ENCODE measurements at regions of chr3 and their contacts with region 1.

Region 1: GRCh38 chr3:141279077-141279967 is 47.7 kb downstream of the PXYLP1 start:
- DNase-seq: no peak
- ATAC-seq: peak; percentile 57 to 73
- H3K4me3 ChIP-seq: no peak overlapping the region
- H3K27ac ChIP-seq: no peak overlapping the region
- H3K4me1 ChIP-seq: peaks cover 3% of the 10 kb centered on the region
- H3K27me3 ChIP-seq: no peaks in the 10 kb centered on the region

Region 2: GRCh38 chr3:141105828-141106628 is 173.3 kb before region 1 on chr3:
- intact Hi-C with region 1: no loop called
- DNase-seq: peak in 2 of 3 donors; percentile 51 to 75
- ATAC-seq: peak in 1 of 2 donors; percentile 32
- H3K4me3 ChIP-seq: no peak overlapping the region
- H3K27ac ChIP-seq: no peak overlapping the region
- H3K4me1 ChIP-seq: peaks cover 7% of the 10 kb centered on the region
- H3K27me3 ChIP-seq: no peaks in the 10 kb centered on the region

Region 3: GRCh38 chr3:141231101-141231935 is 48.0 kb before region 1 on chr3 and contains the start of gene PXYLP1:
- intact Hi-C with region 1: loop called in 2 of 4 experiments (anchors 5 kb)
- DNase-seq: peak; percentile 95 to 99 (median 98)
- ATAC-seq: peak; percentile 97 to 98
- H3K4me3 ChIP-seq: peak within 1 kb of the TSS; percentile 86
- H3K27ac ChIP-seq: peak within 1 kb of the TSS; percentile 59
- H3K4me1 ChIP-seq: no peaks in the 10 kb centered on the region
- H3K27me3 ChIP-seq: no peaks in the 10 kb centered on the region
- total RNA-seq, gene PXYLP1: 10.6 to 15.1 (median 12.3) TPM

Region 4: DNA sequence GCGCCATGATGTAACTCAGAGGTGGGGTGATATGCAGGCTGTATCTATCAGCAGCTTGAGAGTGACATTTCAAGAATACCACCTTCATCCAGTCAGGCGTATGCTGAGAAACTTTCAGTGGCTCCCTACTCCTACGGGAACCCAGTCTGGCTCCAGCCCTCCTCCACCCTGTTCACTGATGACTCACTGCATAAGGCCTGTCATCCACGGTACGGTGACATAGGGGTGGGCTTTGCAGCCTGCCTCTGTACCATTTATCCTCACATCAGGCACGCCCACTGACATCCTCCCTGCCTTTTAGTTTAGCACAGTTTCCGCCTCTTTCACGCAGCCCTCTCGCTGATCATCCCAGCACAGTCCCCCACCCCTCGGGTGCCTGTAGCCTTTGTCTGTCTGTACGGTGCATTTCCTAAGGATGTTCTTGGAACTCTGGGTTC is 36.0 kb before region 1 on chr3:
- intact Hi-C with region 1: loop called in 1 of 4 experiments (anchors 5 kb)
- DNase-seq: no peak
- ATAC-seq: peak; percentile 13 to 59
- H3K4me3 ChIP-seq: no peak overlapping the region
- H3K27ac ChIP-seq: peak overlapping the region; percentile 39
- H3K4me1 ChIP-seq: peaks cover 24% of the 10 kb centered on the region
- H3K27me3 ChIP-seq: no peaks in the 10 kb centered on the region